ENCODE measurements at regions of chr13 and their contacts with region 1.

Region 1: DNA sequence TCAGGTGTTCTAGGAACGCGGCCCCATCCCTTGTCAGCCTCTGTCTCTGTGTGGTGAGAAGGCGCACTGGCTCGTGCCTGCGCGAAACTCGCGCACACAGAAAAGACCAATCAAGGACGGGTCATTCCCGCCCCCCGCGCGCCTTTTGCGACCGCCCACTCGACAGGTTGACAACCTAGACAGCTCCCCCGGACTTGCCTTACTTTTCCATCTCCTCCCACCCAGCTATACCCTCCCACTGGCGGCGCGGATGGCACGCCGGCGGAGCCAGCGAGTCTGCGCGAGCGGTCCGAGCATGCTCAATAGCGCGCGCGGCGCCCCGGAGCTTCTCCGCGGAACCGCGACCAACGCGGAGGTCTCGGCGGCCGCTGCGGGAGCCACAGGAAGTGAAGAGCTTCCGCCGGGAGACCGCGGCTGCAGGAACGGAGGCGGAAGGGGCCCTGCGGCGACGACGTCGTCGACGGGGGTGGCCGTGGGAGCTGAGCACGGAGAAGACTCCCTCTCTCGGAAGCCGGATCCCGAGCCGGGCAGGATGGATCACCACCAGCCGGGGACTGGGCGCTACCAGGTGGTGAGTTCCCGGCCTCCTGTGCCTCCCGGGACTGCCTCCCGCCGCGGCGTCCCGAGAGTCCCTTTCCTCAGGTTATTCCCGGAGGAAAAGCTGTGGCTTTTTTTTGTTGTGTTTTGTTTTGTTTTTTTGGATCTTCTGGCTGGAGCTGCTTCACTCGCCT is at the start of gene NDFIP2:
- DNase-seq: peak; percentile 94
- ATAC-seq: peak; percentile 69
- H3K4me3 Mint-ChIP-seq: peak within 1 kb of the TSS; percentile 83
- H3K27ac Mint-ChIP-seq: peak within 1 kb of the TSS; percentile 97
- H3K4me1 Mint-ChIP-seq: peaks cover 53% of the 10 kb centered on the region
- H3K27me3 Mint-ChIP-seq: no peaks in the 10 kb centered on the region
- total RNA-seq, gene NDFIP2: 160 to 205 TPM

Region 2: DNA sequence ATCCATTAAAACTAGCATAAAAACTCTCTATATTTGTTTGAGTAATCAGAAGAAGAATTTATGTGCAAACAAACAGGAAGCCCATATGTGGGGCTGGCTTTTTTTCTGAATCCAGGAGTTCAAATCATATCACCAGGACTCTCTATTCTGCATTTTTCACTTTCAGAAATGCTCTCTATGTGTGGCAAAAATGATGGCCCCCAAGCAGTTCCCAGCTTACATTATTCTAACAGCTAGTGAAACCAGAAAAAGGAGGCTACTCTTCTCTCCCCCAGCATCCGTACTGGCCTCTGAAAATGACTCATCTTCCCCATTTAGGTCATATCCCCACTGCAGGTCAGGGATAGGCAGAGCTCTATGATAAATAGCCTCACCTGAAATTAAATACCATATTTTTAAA is 95.4 kb before region 1 on chr13:
- CTCF ChIA-PET with region 1: no interaction called
- POLR2A ChIA-PET with region 1: interaction called, 5 read pairs
- intact Hi-C with region 1: loop called in 1 of 2 experiments (anchors 1 kb)
- DNase-seq: peak; percentile 53
- ATAC-seq: peak; percentile 72
- H3K4me3 Mint-ChIP-seq: peak overlapping the region; percentile 30
- H3K27ac Mint-ChIP-seq: no peak overlapping the region
- H3K4me1 Mint-ChIP-seq: peaks cover 79% of the 10 kb centered on the region
- H3K27me3 Mint-ChIP-seq: no peaks in the 10 kb centered on the region

Region 3: DNA sequence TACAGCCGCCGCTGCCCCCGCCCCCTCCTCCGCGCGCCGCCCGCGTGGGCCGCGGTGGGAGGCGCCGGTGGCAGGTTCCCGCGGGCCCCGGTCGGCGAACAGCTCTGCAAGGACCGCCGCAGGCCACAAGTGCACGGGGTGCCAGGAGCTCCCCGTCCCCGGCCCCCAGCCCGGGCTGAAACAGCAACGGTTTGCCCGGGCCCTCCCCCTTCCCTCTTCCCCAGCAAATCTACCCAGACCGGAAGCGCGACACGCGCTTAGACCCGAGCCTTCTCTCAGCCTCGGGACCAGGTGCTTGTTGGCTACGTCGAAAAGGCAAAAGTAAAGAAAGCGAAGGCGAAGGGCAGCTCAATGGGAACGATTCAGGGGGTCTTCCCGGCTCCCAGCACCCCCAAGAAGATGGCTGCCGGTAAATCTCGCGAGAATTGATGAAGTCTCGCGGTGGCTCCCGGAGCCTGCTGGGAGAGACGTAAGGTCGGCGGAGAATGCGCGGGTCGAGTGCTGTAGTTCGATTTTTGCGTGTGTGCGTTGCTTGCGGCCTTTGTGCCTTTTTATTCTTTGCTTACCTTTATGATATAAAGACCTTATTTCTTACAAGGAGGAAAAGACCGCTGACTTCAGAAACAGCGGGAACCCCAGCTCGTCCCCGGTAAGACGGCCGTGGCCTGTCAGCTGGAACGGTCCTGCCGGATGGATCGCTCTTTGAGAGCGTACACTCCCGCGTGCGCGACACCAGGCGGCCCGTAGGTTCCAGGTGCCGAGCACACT is 75.1 kb before region 1 on chr13 and contains the start of gene RBM26:
- CTCF ChIA-PET with region 1: interaction called, 5 read pairs
- POLR2A ChIA-PET with region 1: interaction called, 14 read pairs
- intact Hi-C with region 1: loop called (anchors 1 kb)
- DNase-seq: peak; percentile 97
- ATAC-seq: peak; percentile 87
- H3K4me3 Mint-ChIP-seq: no peak within 1 kb of the TSS
- H3K27ac Mint-ChIP-seq: peak within 1 kb of the TSS; percentile 98
- H3K4me1 Mint-ChIP-seq: peaks cover 44% of the 10 kb centered on the region
- H3K27me3 Mint-ChIP-seq: no peaks in the 10 kb centered on the region
- total RNA-seq, gene RBM26: 61.3 to 79.6 TPM

Region 4: DNA sequence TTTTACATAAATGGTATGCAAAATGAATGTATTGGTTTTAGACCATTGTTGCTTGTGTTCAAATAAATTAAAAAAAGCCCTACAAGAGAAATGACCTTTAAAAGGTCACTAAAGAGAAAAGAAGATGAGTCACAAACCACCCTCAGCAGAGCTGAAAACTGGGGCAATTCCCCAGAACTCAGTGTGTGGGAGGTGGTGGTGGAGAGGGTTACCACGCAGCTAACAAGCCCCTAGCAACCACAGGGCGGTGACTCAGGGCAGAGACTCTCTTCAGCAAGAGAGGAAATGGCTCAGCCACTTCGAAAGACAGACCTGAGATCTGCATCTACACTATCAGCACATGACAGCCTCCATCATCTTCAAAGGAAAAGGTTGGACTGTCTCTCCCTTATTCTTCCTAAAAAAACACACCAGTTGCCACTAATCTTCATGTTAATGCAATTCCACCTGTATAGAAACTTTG is 29.6 kb before region 1 on chr13:
- CTCF ChIA-PET with region 1: interaction called, 36 read pairs
- POLR2A ChIA-PET with region 1: interaction called, 58 read pairs
- intact Hi-C with region 1: loop called (anchors 1 kb)
- DNase-seq: peak; percentile 97
- ATAC-seq: peak; percentile 97
- H3K4me3 Mint-ChIP-seq: peak overlapping the region; percentile 75
- H3K27ac Mint-ChIP-seq: peak overlapping the region; percentile 99
- H3K4me1 Mint-ChIP-seq: peaks cover 81% of the 10 kb centered on the region
- H3K27me3 Mint-ChIP-seq: no peaks in the 10 kb centered on the region

Region 5: DNA sequence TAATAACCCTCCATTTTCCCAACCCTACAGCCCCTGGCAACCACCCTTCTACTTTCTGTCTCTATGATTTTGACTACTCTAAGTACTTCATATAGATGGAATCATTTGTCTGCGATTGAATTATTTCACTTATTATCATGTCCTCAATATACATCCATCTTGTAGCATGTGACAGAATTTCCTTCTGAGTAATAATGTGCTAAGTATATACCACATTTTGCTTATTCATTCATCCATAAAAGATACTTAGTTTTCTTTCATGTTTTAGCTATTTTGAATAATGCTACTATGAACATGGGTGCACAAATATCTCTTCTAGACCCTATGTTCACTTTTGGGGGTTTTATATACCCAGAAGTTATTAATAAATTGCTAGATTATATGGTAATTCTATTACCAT is 17.5 kb before region 1 on chr13:
- CTCF ChIA-PET with region 1: interaction called, 36 read pairs
- POLR2A ChIA-PET with region 1: interaction called, 58 read pairs
- intact Hi-C with region 1: loop called in 1 of 2 experiments (anchors 2 kb)
- DNase-seq: no peak
- ATAC-seq: peak; percentile 63
- H3K4me3 Mint-ChIP-seq: no peak overlapping the region
- H3K27ac Mint-ChIP-seq: no peak overlapping the region
- H3K4me1 Mint-ChIP-seq: peaks cover 22% of the 10 kb centered on the region
- H3K27me3 Mint-ChIP-seq: no peaks in the 10 kb centered on the region

Region 6: DNA sequence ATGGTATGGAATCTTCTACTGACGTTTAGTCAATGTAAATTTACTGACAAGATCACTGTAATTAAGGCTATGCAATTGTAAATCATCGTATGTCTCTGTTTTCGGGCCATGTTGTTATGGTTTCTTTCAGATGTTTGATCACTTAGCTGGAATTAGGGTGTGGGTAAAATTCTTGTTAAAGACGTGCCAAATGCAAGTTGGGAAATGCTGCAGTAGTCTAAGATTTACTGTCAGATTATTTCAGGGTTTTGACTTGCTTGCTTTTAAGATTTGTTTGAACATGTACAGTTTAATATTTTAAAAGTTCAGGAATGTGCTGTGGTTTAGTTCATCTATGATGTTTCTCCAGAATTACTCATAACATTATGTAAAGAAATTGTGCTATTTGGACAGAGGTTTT is 10.6 kb after region 1 on chr13:
- CTCF ChIA-PET with region 1: interaction called, 9 read pairs
- POLR2A ChIA-PET with region 1: interaction called, 10 read pairs
- intact Hi-C with region 1: loop called in 1 of 2 experiments (anchors 1 kb)
- DNase-seq: no peak
- ATAC-seq: peak; percentile 17
- H3K4me3 Mint-ChIP-seq: peak overlapping the region; percentile 50
- H3K27ac Mint-ChIP-seq: peak overlapping the region; percentile 90
- H3K4me1 Mint-ChIP-seq: peaks cover 92% of the 10 kb centered on the region
- H3K27me3 Mint-ChIP-seq: no peaks in the 10 kb centered on the region

Region 7: DNA sequence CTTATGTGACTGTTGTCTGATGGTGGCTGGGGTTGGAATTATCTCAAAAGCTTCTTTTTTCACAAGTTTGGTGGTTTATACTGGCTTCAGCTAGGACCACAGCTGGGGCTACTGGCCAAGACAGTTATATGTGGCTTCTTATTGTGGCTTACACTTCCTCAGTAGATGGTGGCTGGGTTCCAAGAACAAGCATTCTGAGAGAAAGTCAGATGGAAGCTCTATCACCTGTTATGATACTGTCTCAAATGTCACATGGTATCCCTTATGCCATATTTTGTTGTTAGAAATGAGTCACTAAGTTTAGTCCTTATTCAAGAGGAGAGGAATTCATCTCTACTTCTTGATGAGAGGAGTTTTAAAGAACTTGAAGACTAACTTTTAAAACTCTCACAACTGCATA is 41.5 kb after region 1 on chr13:
- CTCF ChIA-PET with region 1: interaction called, 4 read pairs
- POLR2A ChIA-PET with region 1: interaction called, 3 read pairs
- intact Hi-C with region 1: loop called (anchors 1 kb)
- DNase-seq: peak; percentile 48
- ATAC-seq: peak; percentile 91
- H3K4me3 Mint-ChIP-seq: peak overlapping the region; percentile 26
- H3K27ac Mint-ChIP-seq: peak overlapping the region; percentile 91
- H3K4me1 Mint-ChIP-seq: peaks cover 26% of the 10 kb centered on the region
- H3K27me3 Mint-ChIP-seq: no peaks in the 10 kb centered on the region

Measured in activated CD4-positive, alpha-beta T cell treated with anti-CD3 and anti-CD28 coated beads for 36 hours (primary cell).